HCT116 (cell line): ENCODE measurements at regions of chr7 and their contacts with region 1.

Region 1: GRCh38 chr7:128020159-128020558 is 11.1 kb downstream of the LRRC4 start:
- DNase-seq: peak; percentile 31
- ATAC-seq: peak; percentile 79
- H3K4me3 ChIP-seq: no peak overlapping the region
- H3K27ac ChIP-seq: no peak overlapping the region
- H3K4me1 ChIP-seq: peaks cover 0 to 44% of the 10 kb centered on the region in 2 experiments; a peak in 2 of 4 replicates
- H3K27me3 ChIP-seq: no peaks in the 10 kb centered on the region
- CTCF ChIP-seq: peak; percentile 79 to 99 (median 82)
- POLR2A ChIP-seq: no peak
- RAD21 ChIP-seq: peak; percentile 37

Region 2: GRCh38 chr7:127708788-127709187 is 311.4 kb before region 1 on chr7:
- CTCF ChIA-PET with region 1: no interaction called
- POLR2A ChIA-PET with region 1: no interaction called
- RAD21 ChIA-PET with region 1: no interaction called
- intact Hi-C with region 1: loop called (anchors 10 kb)
- DNase-seq: peak; percentile 54
- ATAC-seq: peak; percentile 82
- H3K4me3 ChIP-seq: no peak overlapping the region
- H3K27ac ChIP-seq: no peak overlapping the region
- H3K4me1 ChIP-seq: peaks cover 0 to 4% of the 10 kb centered on the region in 2 experiments; a peak in 1 of 4 replicates
- H3K27me3 ChIP-seq: no peaks in the 10 kb centered on the region
- CTCF ChIP-seq: peak; percentile 56 to 69 (median 67); a peak in 5 of 6 replicates
- POLR2A ChIP-seq: no peak
- RAD21 ChIP-seq: peak; percentile 71

Region 3: GRCh38 chr7:128373606-128374005 is 353.4 kb after region 1 on chr7:
- CTCF ChIA-PET with region 1: no interaction called
- POLR2A ChIA-PET with region 1: no interaction called
- RAD21 ChIA-PET with region 1: no interaction called
- intact Hi-C with region 1: no loop called
- DNase-seq: no peak
- ATAC-seq: no peak
- H3K4me3 ChIP-seq: no peak overlapping the region
- H3K27ac ChIP-seq: no peak overlapping the region
- H3K4me1 ChIP-seq: no peaks in the 10 kb centered on the region
- H3K27me3 ChIP-seq: no peaks in the 10 kb centered on the region
- CTCF ChIP-seq: no peak
- POLR2A ChIP-seq: no peak
- RAD21 ChIP-seq: no peak